ENCODE measurements at regions of chr22 and their contacts with region 1.

Region 1: DNA sequence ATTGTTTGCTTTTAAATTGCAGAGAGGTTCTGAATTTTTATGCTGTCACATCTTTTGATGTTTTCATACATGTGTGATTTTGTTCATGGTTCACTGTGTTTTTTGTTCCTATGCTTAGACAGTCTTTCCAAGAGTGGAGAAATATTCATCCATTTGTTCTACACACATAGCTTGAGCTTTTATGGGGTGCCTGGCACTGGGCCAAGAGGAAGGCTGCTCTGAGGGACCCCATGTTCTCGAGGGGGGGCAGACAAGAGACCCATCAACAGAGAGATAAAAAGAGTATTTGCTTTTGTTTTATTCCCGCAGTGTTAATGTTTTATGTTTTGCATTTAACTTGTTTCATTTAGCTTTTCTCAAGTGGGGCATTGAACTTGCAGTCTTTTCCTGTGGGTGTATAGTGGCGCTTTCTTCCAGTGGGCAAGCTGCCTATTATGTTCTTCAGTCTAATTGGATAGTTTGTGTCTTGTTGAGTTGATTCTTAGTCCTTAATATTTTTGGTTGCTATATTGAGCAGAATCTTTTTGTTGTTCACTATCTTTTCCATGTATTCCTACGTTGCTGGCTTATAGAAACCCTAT is 57.7 kb downstream of the CABIN1 start:
- DNase-seq: no peak
- ATAC-seq: no peak
- H3K4me3 ChIP-seq: no peak overlapping the region
- H3K27ac ChIP-seq: no peak overlapping the region
- H3K4me1 ChIP-seq: peaks cover 0 to 37% (median 12%) of the 10 kb centered on the region in 9 donors
- H3K27me3 ChIP-seq: no peaks in the 10 kb centered on the region
- CTCF ChIP-seq: no peak

Region 2: GRCh38 chr22:24043958-24044357 is 24.8 kb before region 1 on chr22:
- intact Hi-C with region 1: loop called in 1 of 10 experiments (anchors 1 kb)
- DNase-seq: no peak
- ATAC-seq: no peak
- H3K4me3 ChIP-seq: no peak overlapping the region
- H3K27ac ChIP-seq: no peak overlapping the region
- H3K4me1 ChIP-seq: peaks cover 0 to under 1% (median 0%) of the 10 kb centered on the region in 9 donors
- H3K27me3 ChIP-seq: no peaks in the 10 kb centered on the region
- CTCF ChIP-seq: no peak

Measured in heart right ventricle (tissue), 16 donors.